ENCODE measurements at regions of chr3 and their contacts with region 1.

Region 1: GRCh38 chr3:189355481-189356201 is 183.9 kb downstream of the TPRG1 start:
- DNase-seq: peak; percentile 30
- ATAC-seq: peak; percentile 89
- H3K4me3 Mint-ChIP-seq: peak overlapping the region; percentile 69
- H3K27ac Mint-ChIP-seq: peak overlapping the region; percentile 92
- H3K4me1 Mint-ChIP-seq: peaks cover 10% of the 10 kb centered on the region
- H3K27me3 Mint-ChIP-seq: no peaks in the 10 kb centered on the region

Region 2: DNA sequence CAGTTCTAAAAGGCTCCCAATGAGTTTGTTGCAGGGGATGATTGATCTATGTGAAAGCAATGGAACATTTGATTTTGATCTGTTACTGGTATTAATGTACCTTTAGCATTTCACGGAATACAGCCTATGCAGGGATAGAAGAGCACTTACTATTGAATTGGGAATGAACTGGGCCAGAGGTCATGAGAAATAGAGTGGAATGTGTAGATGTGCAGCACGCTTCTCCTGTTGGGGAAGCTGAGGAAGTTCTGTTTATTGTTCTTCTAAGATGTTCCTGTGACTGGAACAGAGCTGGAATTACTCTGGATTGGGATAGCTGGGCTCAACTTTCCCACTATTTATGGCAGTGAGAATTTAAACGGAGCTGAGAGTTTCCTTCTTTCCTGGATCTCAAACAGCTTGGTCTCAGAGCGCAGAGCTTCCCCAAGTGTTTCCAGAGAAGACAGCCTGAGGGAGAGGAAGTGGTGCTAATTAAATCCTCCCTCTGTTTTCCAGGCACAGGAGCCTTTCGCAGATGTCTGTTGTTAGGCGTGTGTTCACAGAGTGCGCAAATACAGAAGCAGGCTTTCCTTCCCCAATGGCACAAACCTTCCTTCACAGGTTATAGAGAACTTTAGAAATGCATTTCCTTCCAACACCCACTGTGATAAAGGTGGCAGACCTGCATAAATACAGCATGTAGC is 151.3 kb before region 1 on chr3:
- POLR2A ChIA-PET with region 1: no interaction called
- DNase-seq: no peak
- ATAC-seq: no peak
- H3K4me3 Mint-ChIP-seq: no peak overlapping the region
- H3K27ac Mint-ChIP-seq: no peak overlapping the region
- H3K4me1 Mint-ChIP-seq: no peaks in the 10 kb centered on the region
- H3K27me3 Mint-ChIP-seq: peaks cover 3% of the 10 kb centered on the region

Region 3: GRCh38 chr3:189324538-189325138 is 31.0 kb before region 1 on chr3:
- POLR2A ChIA-PET with region 1: interaction called, 14 read pairs
- DNase-seq: peak; percentile 70
- ATAC-seq: peak; percentile 99
- H3K4me3 Mint-ChIP-seq: peak overlapping the region; percentile 86
- H3K27ac Mint-ChIP-seq: peak overlapping the region; percentile 98
- H3K4me1 Mint-ChIP-seq: peaks cover 33% of the 10 kb centered on the region
- H3K27me3 Mint-ChIP-seq: no peaks in the 10 kb centered on the region

Region 4: GRCh38 chr3:189331002-189331418 is 24.6 kb before region 1 on chr3:
- POLR2A ChIA-PET with region 1: interaction called, 14 read pairs
- DNase-seq: no peak
- ATAC-seq: peak; percentile 65
- H3K4me3 Mint-ChIP-seq: peak overlapping the region; percentile 20
- H3K27ac Mint-ChIP-seq: peak overlapping the region; percentile 64
- H3K4me1 Mint-ChIP-seq: peaks cover 27% of the 10 kb centered on the region
- H3K27me3 Mint-ChIP-seq: no peaks in the 10 kb centered on the region

Region 5: GRCh38 chr3:189394599-189395121 is 39.0 kb after region 1 on chr3:
- POLR2A ChIA-PET with region 1: no interaction called
- DNase-seq: no peak
- ATAC-seq: no peak
- H3K4me3 Mint-ChIP-seq: no peak overlapping the region
- H3K27ac Mint-ChIP-seq: no peak overlapping the region
- H3K4me1 Mint-ChIP-seq: no peaks in the 10 kb centered on the region
- H3K27me3 Mint-ChIP-seq: no peaks in the 10 kb centered on the region